ENCODE measurements at regions of chr2 and their contacts with region 1.

Region 1: DNA sequence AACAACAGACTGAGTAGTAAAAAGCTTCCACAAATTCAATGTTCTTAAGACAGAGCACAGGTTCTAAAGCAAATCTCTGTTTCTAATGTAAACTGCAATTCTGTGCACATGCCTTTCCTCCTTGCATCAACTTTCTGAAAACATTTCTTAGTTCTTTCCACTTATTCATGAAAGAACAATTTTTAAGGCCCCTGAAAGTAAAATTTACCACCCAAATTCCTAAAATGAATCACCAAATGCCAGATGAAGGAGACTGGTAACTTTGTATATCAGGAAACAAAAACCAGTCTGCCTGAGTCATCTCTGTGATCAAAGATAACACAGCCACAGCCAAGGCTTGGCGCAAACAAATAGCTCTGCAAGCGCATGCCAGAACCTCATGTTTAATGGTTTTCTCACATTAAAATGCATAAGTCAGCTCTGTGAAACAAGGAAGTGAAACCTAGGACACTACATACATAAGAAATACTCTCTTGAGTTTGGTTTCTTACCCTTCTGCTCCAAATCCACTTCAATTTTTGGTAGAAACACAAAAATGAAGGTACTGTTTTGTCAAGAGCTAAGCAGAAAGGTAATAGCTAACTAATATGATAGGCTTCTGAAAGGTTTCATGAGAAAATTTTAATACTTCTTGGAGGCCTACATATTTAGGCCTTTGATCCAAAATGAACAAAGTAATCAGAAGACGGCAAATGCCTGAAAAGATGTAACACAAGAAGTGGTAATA is 169.4 kb downstream of the THADA start:
- DNase-seq: peak; percentile 96
- ATAC-seq: peak; percentile 83
- H3K4me3 ChIP-seq: no peak overlapping the region
- H3K27ac ChIP-seq: peak overlapping the region; percentile 94
- H3K4me1 ChIP-seq: peaks cover 44% of the 10 kb centered on the region
- H3K27me3 ChIP-seq: no peaks in the 10 kb centered on the region
- CTCF ChIP-seq: no peak
- EP300 ChIP-seq: peak; percentile 96 to 98
- POLR2A ChIP-seq: 0 out of 2 replicates have a peak, but pooled peaks have one; percentile 27
- RAD21 ChIP-seq: no peak; the same call in 1 of the 2 replicates

Region 2: DNA sequence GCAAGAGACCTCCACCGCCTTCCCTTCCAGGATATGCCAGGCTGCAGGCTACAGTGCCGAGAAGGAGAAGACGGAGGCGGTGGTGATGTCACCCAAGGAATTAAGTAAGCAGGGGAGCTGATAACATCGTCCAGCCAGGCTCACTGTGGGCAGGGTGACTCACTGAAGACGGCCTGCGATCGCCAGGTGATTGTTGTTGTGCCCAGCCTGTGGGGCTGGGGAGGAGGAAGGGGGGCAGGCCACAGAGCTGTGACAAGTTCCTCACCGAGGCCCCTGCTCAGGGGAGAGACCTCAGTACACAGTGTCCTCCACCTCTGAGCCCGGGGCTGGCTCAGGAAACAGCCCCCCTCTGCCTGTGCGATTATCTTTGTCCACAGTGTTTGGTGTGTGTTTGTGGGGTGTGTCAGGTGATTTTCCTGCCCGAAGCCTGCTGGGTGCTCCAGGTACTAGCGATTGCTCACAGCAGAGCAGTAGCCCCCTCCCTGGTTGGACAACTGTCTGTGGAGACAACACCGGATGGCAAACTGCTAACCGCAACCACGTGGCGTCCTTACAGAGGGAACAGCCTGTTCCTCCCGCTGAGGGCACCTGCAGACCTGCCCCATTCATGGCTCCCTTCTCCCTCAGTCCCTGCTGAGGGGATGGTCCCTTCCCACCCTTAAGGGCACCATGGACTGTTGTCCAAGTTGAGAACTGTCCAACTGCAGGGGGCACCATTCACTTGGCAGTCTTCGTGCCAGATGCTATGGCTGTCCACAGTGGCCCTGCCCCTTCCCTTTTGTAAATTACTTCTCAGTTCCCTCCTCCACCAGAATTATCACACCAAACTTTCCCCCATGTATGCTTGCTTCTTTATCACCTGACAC is 295.2 kb before region 1 on chr2:
- CTCF ChIA-PET with region 1: interaction called, 3 read pairs
- POLR2A ChIA-PET with region 1: no interaction called
- RAD21 ChIA-PET with region 1: no interaction called
- SMC1A ChIA-PET with region 1: no interaction called
- in situ Hi-C with region 1: no loop called
- intact Hi-C with region 1: loop called (anchors 1 kb)
- DNase-seq: no peak
- ATAC-seq: peak; percentile 81
- H3K4me3 ChIP-seq: no peak overlapping the region
- H3K27ac ChIP-seq: no peak overlapping the region
- H3K4me1 ChIP-seq: peaks cover 43% of the 10 kb centered on the region
- H3K27me3 ChIP-seq: no peaks in the 10 kb centered on the region
- CTCF ChIP-seq: peak; percentile 61 to 82 (median 62); a peak in 5 of 6 replicates
- EP300 ChIP-seq: no peak; a peak in 1 of 4 replicates
- POLR2A ChIP-seq: no peak
- RAD21 ChIP-seq: peak; percentile 78

Region 3: DNA sequence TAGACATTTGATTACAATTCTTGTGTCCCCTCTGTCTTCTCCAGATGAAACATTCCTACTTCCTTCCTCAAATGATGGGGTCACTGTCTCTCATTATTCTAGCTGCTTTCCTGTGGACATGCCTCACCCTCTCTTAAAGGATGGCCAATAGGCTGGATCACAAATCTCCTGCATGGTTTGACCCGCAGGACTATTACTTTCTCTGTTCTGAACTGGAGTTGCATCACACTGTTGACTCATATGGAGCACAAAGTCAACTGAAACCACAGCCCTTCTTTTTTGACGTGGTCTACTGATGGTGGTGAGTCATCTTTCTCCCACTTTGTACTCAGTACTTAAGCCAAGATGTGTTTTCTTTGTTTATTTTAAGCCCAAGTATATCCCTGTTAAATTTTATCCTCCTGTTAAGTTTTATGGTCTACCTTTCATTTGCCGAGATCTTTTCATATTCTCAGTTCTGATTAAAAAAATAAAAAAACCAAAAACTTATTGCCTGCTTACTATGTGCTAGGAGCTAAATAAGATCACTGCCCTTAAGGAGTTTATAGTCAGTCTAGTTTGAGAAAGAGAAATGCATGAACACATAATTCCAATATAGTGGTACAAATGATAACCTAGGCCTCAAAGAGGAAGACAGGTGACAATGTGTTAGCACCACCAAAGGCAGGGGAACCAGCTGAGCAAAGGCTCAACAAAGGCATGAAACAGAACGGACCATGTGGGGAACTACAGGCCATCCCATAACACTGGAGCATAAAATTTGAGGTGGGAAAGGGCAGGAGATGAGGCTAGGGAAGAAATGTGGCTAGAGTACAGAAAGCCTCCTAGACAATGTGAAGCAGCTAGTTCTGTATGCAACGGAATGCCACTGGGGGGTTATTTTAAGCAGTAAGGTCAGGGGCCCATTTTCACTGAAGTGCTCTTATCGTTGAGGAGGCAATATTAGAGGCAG is 132.4 kb before region 1 on chr2:
- CTCF ChIA-PET with region 1: no interaction called
- POLR2A ChIA-PET with region 1: interaction called, 4 read pairs
- RAD21 ChIA-PET with region 1: interaction called, 5 read pairs
- SMC1A ChIA-PET with region 1: interaction called, 9 read pairs
- in situ Hi-C with region 1: no loop called
- intact Hi-C with region 1: loop called (anchors 2 kb)
- DNase-seq: peak; percentile 90
- ATAC-seq: peak; percentile 98
- H3K4me3 ChIP-seq: peak overlapping the region; percentile 6; the same call in 1 of the 2 replicates
- H3K27ac ChIP-seq: peak overlapping the region; percentile 78
- H3K4me1 ChIP-seq: peaks cover 21% of the 10 kb centered on the region
- H3K27me3 ChIP-seq: no peaks in the 10 kb centered on the region
- CTCF ChIP-seq: no peak
- EP300 ChIP-seq: peak; percentile 87 to 88; a peak in 3 of 4 replicates
- POLR2A ChIP-seq: no peak
- RAD21 ChIP-seq: 0 out of 2 replicates have a peak, but pooled peaks have one; percentile 5

Region 4: DNA sequence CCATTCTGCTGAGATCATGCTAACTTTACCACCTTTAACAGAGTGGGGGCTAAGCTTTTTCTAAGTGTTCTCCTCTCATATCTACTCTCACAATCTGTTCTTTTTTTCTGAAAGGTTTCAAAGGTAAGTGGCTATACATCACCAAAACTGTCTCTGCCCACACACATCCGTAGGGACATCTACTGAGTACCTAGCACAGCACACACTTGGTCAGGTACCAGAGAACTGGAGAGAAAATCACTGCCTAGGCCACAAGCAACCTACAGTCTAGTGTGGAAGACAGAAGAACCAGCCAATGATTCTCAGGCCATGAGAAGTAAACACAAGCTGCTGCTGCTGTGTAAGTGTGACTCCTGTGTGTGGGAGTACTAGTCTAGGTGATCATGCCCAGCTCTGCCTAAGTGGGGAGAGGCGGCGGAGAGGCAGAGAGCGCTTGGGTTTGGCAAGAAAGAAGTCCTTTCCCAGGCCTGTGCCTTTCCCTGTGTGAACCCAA is 24.0 kb before region 1 on chr2:
- CTCF ChIA-PET with region 1: interaction called, 112 read pairs
- POLR2A ChIA-PET with region 1: interaction called, 185 read pairs
- RAD21 ChIA-PET with region 1: interaction called, 360 read pairs
- SMC1A ChIA-PET with region 1: interaction called, 378 read pairs
- in situ Hi-C with region 1: no loop called
- intact Hi-C with region 1: loop called (anchors 1 kb)
- DNase-seq: peak; percentile 79
- ATAC-seq: peak; percentile 73
- H3K4me3 ChIP-seq: peak overlapping the region; percentile 40
- H3K27ac ChIP-seq: peak overlapping the region; percentile 97
- H3K4me1 ChIP-seq: peaks cover 64% of the 10 kb centered on the region
- H3K27me3 ChIP-seq: no peaks in the 10 kb centered on the region
- CTCF ChIP-seq: no peak
- EP300 ChIP-seq: peak in 1 of 2 experiments; percentile 22; a peak in 1 of 4 replicates
- POLR2A ChIP-seq: peak; percentile 38
- RAD21 ChIP-seq: peak; percentile 34

Region 5: GRCh38 chr2:43455731-43456642 is 29.5 kb after region 1 on chr2:
- CTCF ChIA-PET with region 1: interaction called, 6 read pairs
- POLR2A ChIA-PET with region 1: interaction called, 8 read pairs
- RAD21 ChIA-PET with region 1: interaction called, 36 read pairs
- SMC1A ChIA-PET with region 1: interaction called, 46 read pairs
- in situ Hi-C with region 1: no loop called
- intact Hi-C with region 1: loop called (anchors 2 kb)
- DNase-seq: peak; percentile 35
- ATAC-seq: peak; percentile 75
- H3K4me3 ChIP-seq: no peak overlapping the region
- H3K27ac ChIP-seq: peak overlapping the region; percentile 1; the same call in 1 of the 2 replicates
- H3K4me1 ChIP-seq: peaks cover 35% of the 10 kb centered on the region
- H3K27me3 ChIP-seq: no peaks in the 10 kb centered on the region
- CTCF ChIP-seq: peak; percentile 5 to 26 (median 21); a peak in 3 of 6 replicates
- EP300 ChIP-seq: peak in 1 of 2 experiments; percentile 36; a peak in 1 of 4 replicates
- POLR2A ChIP-seq: no peak
- RAD21 ChIP-seq: 0 out of 2 replicates have a peak, but pooled peaks have one; percentile 9

Region 6: GRCh38 chr2:43478411-43479086 is 52.1 kb after region 1 on chr2:
- CTCF ChIA-PET with region 1: interaction called, 38 read pairs
- POLR2A ChIA-PET with region 1: interaction called, 11 read pairs
- RAD21 ChIA-PET with region 1: interaction called, 125 read pairs
- SMC1A ChIA-PET with region 1: interaction called, 108 read pairs
- in situ Hi-C with region 1: no loop called
- intact Hi-C with region 1: loop called (anchors 1 kb)
- DNase-seq: no peak
- ATAC-seq: peak; percentile 56
- H3K4me3 ChIP-seq: no peak overlapping the region
- H3K27ac ChIP-seq: peak overlapping the region; percentile 2; the same call in 1 of the 2 replicates
- H3K4me1 ChIP-seq: peaks cover 25% of the 10 kb centered on the region
- H3K27me3 ChIP-seq: no peaks in the 10 kb centered on the region
- CTCF ChIP-seq: no peak
- EP300 ChIP-seq: peak; percentile 34 to 47; a peak in 1 of 4 replicates
- POLR2A ChIP-seq: no peak
- RAD21 ChIP-seq: no peak

Region 7: DNA sequence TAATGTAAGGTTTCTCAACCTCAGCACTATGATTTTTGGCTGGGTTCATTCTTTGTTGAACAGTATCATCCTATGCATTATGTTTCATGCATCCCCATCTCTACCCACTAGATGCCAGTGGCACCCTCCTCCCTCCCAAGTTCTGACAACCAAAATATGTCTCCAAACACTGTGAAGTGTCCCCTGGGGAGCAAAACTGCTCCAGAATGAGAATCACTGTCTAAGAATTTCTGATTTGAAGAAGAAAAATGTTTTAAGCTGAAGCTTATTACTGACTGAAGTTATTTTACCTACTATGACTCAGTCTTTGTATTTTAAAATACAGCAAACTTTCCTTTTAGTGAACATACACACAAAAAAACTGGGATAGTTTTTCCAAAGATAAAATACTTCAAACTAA is 166.0 kb after region 1 on chr2:
- CTCF ChIA-PET with region 1: no interaction called
- POLR2A ChIA-PET with region 1: no interaction called
- RAD21 ChIA-PET with region 1: no interaction called
- SMC1A ChIA-PET with region 1: no interaction called
- in situ Hi-C with region 1: no loop called
- intact Hi-C with region 1: no loop called
- DNase-seq: no peak
- ATAC-seq: no peak
- H3K4me3 ChIP-seq: no peak overlapping the region
- H3K27ac ChIP-seq: no peak overlapping the region
- H3K4me1 ChIP-seq: peaks cover 3% of the 10 kb centered on the region; the same call in 1 of the 2 replicates
- H3K27me3 ChIP-seq: no peaks in the 10 kb centered on the region
- CTCF ChIP-seq: no peak
- EP300 ChIP-seq: no peak
- POLR2A ChIP-seq: no peak
- RAD21 ChIP-seq: no peak

Region 8: DNA sequence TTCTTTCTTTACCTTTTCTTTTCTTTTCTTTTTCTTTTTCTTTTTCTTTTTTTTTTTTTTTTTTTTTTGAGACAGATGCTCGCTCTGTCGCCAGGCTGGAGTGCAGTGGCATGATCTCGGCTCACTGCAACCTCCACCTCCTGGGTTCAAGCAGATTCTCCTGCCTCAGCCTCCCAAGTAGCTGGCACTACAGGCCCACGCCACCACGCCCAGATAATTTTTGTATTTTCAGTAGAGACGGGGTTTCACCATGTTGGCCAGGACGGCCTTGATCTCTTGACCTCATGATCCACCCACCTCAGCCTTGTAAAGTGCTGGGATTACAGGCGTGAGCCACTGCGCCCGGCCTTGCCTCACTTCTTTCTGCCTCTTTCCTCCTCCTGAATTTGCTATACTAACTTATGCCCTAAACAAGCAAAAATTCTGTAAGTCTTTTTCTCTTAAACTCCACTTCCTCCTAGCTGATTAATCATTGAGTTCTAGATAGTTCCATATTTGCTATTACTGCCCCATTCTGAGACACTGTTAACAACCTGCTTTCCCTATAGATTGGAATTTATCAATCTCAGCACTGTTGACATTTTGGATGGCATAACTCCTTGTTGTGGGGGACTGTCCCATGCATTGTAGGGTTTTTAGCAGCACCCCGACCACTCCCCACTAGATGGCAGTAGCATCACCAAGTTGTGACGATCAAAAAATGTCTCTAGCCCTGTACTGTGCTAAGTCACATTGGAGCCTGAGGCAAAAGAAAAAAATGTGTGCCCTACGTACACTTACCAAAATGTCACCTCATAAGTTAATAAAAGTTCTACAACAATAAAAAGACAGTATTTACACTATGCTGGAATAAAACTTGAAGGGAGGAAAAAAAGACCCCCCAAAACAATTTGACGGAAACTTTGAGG is 185.8 kb after region 1 on chr2:
- CTCF ChIA-PET with region 1: no interaction called
- POLR2A ChIA-PET with region 1: no interaction called
- RAD21 ChIA-PET with region 1: no interaction called
- SMC1A ChIA-PET with region 1: no interaction called
- in situ Hi-C with region 1: no loop called
- intact Hi-C with region 1: no loop called
- DNase-seq: peak; percentile 17
- ATAC-seq: peak; percentile 97
- H3K4me3 ChIP-seq: no peak overlapping the region
- H3K27ac ChIP-seq: no peak overlapping the region
- H3K4me1 ChIP-seq: no peaks in the 10 kb centered on the region
- H3K27me3 ChIP-seq: no peaks in the 10 kb centered on the region; a peak in 1 of 4 replicates
- CTCF ChIP-seq: peak; percentile 78 to 85 (median 84)
- EP300 ChIP-seq: no peak
- POLR2A ChIP-seq: no peak
- RAD21 ChIP-seq: peak; percentile 64

Measured in GM12878 (cell line).